ENCODE measurements at regions of chr17 and their contacts with region 1.

Region 1: DNA sequence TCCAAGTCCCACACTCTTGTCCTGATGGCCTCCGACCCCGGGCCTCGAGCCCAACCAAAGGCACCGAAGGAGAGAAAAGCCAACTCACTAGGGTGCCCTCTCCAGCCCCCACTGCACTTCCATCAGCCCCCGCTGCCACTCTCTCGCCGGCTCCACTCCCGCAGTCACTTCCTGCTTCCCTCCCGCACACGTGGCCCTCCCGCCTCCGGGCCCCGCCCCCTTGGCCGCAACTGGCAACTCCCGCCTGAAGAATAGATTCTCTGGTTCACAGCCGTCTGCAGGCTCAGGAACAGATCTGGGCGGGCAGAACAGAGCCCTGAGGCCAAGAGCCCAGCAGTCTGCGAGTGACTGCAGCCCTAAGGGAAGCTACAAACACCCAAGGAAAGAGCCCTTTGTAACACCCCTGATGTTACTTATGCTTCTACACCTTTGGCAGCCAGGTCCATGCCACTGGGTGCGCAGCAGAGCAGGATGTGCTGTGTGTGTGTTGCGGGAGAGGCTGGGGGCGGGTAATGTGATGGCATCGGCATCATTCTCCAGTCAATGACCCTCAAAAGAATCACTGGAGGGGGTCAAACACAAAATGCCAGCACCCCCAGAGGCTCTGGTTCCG is at the start of gene SLC39A11:
- DNase-seq: peak; percentile 98
- total RNA-seq, gene SLC39A11: 20.6 to 25.8 TPM

Region 2: DNA sequence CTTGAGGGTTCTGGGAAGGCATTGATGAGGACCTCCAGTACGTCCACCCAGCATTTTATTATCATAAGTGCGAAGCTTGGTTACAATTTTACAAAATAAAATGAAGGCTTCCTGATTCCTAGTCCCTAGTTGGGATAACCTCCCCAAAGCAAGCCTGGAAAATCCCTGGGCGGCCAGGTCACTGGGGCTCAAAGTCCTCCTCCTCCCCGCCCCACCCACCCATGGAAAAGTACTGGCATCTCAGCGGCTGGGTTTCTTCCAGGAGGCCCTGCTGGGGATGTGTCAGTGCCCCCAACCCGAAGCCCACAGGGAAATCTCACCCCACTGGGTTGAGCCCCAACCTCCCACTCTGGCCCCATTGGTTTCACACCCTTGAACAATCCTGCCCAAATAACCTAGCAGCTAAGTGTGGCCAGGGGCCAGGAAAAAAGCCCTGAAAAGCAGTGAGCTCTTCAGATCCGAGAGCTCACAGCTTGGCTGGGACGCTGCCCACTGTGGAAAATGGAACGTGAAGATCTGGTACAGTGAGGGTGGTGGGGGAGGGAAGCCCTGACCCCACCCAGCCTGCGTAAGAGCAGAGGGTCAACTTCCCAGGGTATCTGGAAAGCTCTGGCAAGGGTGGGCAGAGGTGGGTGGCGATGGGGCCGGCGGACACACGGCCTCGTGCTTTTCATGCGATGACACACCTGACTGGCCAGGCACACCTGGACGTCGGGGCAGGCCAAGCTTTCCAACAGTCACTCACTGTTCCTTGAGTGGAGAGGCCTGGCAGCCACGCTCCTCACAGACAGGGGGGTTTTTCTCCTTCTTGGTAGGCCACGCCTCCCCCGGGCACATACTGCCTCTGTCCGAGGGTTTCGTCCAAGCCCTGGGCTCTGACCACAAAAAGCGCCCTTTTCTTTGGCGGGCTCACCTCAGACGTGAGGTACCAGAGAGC is 647.3 kb before region 1 on chr17:
- intact Hi-C with region 1: no loop called
- DNase-seq: no peak

Region 3: GRCh38 chr17:74776044-74776977 is 1683.7 kb after region 1 on chr17 and contains the start of gene NAT9:
- intact Hi-C with region 1: loop called in 1 of 2 experiments (anchors 10 kb)
- DNase-seq: peak; percentile 100
- total RNA-seq, gene NAT9: 26.8 to 31.7 TPM